Pancreas (tissue), 10 donors: ENCODE measurements at regions of chr5 and their contacts with region 1.

Region 1: DNA sequence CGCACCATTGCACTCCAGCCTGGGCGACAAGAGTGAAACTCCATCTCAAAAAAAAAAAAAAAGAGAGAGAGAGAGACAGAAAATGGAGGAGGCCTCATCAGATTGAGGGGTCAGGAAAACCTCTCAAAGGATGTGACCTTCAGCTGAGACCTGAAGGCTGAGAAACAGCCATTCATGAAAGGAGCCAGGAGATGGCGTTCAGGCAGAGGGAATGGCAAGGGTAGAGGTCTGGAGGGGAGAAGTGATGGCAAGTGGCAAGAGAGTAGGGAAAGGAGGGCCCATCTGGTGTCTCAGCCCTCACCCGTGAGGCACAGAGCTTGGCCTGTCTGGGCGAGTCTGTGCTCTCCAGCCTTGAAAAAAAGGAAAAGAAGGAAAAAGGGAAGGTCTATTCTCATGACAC is 17.0 kb downstream of the CAMK2A start:
- DNase-seq: no peak
- ATAC-seq: peak in 3 of 4 donors; percentile 47 to 50 (median 48)
- H3K4me3 ChIP-seq: no peak overlapping the region
- H3K27ac ChIP-seq: no peak overlapping the region
- H3K4me1 ChIP-seq: peaks cover 8 to 18% (median 15%) of the 10 kb centered on the region in 3 donors
- H3K27me3 ChIP-seq: no peaks in the 10 kb centered on the region
- CTCF ChIP-seq: no peak

Region 2: GRCh38 chr5:150436141-150436680 is 163.7 kb after region 1 on chr5:
- intact Hi-C with region 1: loop called in 1 of 3 experiments (anchors 10 kb)
- DNase-seq: peak; percentile 72 to 93 (median 86)
- ATAC-seq: peak; percentile 88 to 97 (median 95)
- H3K4me3 ChIP-seq: no peak overlapping the region
- H3K27ac ChIP-seq: no peak overlapping the region
- H3K4me1 ChIP-seq: no peaks in the 10 kb centered on the region
- H3K27me3 ChIP-seq: no peaks in the 10 kb centered on the region
- CTCF ChIP-seq: peak; percentile 76 to 88 (median 82)

Region 3: DNA sequence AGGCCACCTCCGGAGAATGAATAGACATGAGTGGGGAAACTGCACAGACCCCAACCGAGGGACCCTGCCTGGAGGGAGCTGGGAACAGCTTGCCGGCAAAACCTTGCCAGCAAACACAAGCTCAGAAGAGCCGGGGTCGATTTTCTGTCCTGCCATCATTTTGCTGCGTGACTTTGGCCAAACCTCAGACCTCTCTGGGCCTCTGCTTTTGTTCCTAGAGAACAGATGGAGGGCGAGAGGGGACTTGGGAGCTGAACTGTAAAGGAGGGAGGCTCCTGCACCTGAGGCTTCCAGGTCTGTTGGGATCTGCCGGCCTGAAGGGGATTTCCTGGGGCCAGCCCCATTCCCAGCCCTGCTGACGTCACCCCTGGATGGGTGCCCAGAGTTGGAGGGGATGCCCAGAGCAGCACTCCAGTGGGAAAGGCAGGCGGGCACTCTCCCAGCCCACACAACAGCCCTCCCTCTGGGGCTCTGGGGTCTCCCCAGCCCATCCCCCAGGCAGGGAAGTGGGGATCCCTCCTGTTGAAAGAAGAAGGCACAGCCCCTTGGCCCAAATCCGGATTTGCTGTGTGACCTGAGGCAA is 327.5 kb after region 1 on chr5:
- intact Hi-C with region 1: no loop called
- DNase-seq: peak; percentile 82 to 99 (median 90)
- ATAC-seq: peak; percentile 76 to 93 (median 87)
- H3K4me3 ChIP-seq: no peak overlapping the region
- H3K27ac ChIP-seq: peak overlapping the region in 2 of 4 donors; percentile 20 to 52
- H3K4me1 ChIP-seq: peaks cover 0 to 14% (median 4%) of the 10 kb centered on the region in 3 donors
- H3K27me3 ChIP-seq: no peaks in the 10 kb centered on the region
- CTCF ChIP-seq: no peak